Common myeloid progenitor, CD34-positive (primary cell): ENCODE measurements at regions of chr18 and their contacts with region 1.

Region 1: DNA sequence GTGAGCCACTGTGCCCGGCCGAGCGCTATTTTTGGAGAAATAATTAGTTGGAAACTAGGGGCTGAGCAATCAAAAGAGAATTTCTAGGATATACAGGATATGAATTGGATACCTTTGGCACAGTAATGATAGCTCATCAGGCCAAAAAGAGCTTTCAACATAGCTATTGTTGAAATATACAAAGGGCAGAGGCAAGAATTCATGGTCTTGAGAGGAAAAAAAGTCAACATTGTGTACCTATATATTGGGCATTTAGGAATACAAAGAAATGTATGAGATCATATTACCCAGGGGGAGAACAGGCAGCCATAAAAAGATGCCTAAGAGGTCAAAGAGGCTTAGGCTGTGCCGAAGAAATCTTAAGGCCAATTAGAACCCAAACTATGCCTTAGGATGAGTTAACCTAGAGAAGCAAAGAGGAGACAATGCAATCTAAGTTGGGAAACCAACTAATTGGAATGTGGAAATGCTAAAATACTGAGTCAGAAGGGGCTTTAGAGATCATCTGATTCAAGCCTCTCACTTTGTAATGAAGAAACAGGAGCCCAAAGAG is 99.0 kb downstream of the RBBP8 start:
- DNase-seq: no peak
- H3K4me3 ChIP-seq: no peak overlapping the region
- H3K27ac ChIP-seq: no peak overlapping the region
- H3K4me1 ChIP-seq: no peaks in the 10 kb centered on the region
- H3K27me3 ChIP-seq: no peaks in the 10 kb centered on the region

Region 2: GRCh38 chr18:23113576-23113975 is 81.5 kb after region 1 on chr18:
- CTCF ChIA-PET with region 1: interaction called, 10 read pairs
- POLR2A ChIA-PET with region 1: no interaction called
- DNase-seq: no peak
- H3K4me3 ChIP-seq: no peak overlapping the region
- H3K27ac ChIP-seq: no peak overlapping the region
- H3K4me1 ChIP-seq: peaks cover 0 to 14% (median 11%) of the 10 kb centered on the region in 4 experiments
- H3K27me3 ChIP-seq: no peaks in the 10 kb centered on the region

Region 3: DNA sequence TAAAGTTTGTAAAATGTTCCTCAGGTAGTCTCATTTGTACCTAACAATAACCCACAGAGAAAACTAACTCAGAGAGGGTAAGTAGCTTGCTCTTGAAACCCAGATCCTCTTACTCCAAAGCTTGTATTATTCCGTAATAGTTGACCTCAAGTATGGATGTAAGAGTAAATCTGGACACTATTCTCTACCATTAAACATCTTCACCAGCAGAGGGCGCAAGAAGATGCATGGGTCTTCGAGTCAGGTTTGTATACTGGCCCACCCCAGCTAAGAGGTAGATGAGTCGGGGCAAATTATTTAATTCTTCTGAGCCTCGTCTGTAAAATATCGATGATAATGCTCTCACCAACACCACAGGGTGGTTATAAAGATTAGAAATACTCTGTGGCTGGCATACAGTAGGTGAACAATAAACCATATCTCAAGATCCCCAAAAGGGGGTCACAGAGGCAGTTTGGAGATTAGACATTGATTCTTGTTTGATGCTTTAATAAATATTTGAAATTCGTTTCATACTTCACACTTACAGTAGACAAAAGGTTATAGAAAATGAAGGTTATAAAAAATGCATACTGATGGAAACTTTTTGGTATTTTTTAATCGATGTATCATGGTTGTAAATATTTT is 99.7 kb after region 1 on chr18:
- CTCF ChIA-PET with region 1: interaction called, 29 read pairs
- POLR2A ChIA-PET with region 1: no interaction called
- DNase-seq: peak; percentile 79 to 87 (median 82)
- H3K4me3 ChIP-seq: no peak overlapping the region
- H3K27ac ChIP-seq: no peak overlapping the region
- H3K4me1 ChIP-seq: peaks cover 11 to 21% (median 16%) of the 10 kb centered on the region in 4 experiments
- H3K27me3 ChIP-seq: no peaks in the 10 kb centered on the region

Region 4: GRCh38 chr18:23356915-23357601 is 325.0 kb after region 1 on chr18:
- CTCF ChIA-PET with region 1: interaction called, 22 read pairs
- POLR2A ChIA-PET with region 1: no interaction called
- DNase-seq: no peak
- H3K4me3 ChIP-seq: no peak overlapping the region
- H3K27ac ChIP-seq: no peak overlapping the region
- H3K4me1 ChIP-seq: peaks cover 2 to 46% (median 31%) of the 10 kb centered on the region in 4 experiments
- H3K27me3 ChIP-seq: no peaks in the 10 kb centered on the region

Region 5: GRCh38 chr18:23412351-23412964 is 380.4 kb after region 1 on chr18:
- CTCF ChIA-PET with region 1: interaction called, 16 read pairs
- POLR2A ChIA-PET with region 1: no interaction called
- DNase-seq: no peak
- H3K4me3 ChIP-seq: no peak overlapping the region
- H3K27ac ChIP-seq: no peak overlapping the region
- H3K4me1 ChIP-seq: peaks cover 0 to 5% (median 2%) of the 10 kb centered on the region in 4 experiments
- H3K27me3 ChIP-seq: no peaks in the 10 kb centered on the region